ENCODE measurements at regions of chr6 and their contacts with region 1.

Region 1: GRCh38 chr6:149565527-149566409 is at the start of gene GINM1:
- DNase-seq: peak; percentile 93 to 98 (median 94)
- ATAC-seq: peak; percentile 95 to 98 (median 96)
- H3K4me3 ChIP-seq: peak within 1 kb of the TSS; percentile 60 to 100 (median 90)
- H3K27ac ChIP-seq: peak within 1 kb of the TSS; percentile 72 to 97 (median 92)
- H3K4me1 ChIP-seq: peaks cover 0 to 25% (median 9%) of the 10 kb centered on the region in 12 donors
- H3K27me3 ChIP-seq: no peaks in the 10 kb centered on the region
- CTCF ChIP-seq: peak; percentile 46 to 85 (median 58)
- POLR2A ChIP-seq: no peak
- total RNA-seq, gene GINM1: 42.4 to 60.5 (median 52.7) TPM

Region 2: DNA sequence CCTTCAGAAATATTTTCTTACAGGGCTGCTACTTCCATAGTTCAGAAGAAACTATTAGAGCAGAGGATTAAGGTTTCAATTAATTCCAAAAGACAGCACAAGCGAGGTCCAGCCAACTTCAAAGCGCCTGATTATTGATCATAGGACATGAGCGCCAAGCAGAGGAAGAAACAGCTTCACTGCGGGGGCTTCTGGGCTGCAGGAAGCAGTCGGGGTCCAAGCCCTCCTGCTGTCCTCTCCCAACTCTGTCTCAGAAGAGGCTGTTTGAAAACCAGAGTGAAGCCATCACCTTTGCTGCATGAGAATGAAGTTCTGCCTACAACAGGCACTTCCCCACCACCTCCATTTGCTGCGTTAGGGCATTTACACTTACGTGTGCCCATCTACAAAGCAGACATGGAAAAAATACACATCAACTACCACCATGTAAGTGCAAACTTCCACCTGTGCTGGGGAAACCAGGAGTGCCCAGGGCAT is 141.8 kb before region 1 on chr6:
- intact Hi-C with region 1: no loop called
- DNase-seq: no peak
- ATAC-seq: no peak
- H3K4me3 ChIP-seq: no peak overlapping the region
- H3K27ac ChIP-seq: peak overlapping the region in 2 of 12 donors; percentile 48 to 63
- H3K4me1 ChIP-seq: peaks cover 0 to 10% (median 2%) of the 10 kb centered on the region in 12 donors
- H3K27me3 ChIP-seq: peaks cover 0 to 6% (median 0%) of the 10 kb centered on the region in 9 donors
- CTCF ChIP-seq: no peak
- POLR2A ChIP-seq: no peak

Region 3: GRCh38 chr6:149545754-149546528 is 19.8 kb before region 1 on chr6 and contains the start of gene PPIL4:
- intact Hi-C with region 1: loop called in 1 of 10 experiments (anchors 1 kb)
- DNase-seq: peak; percentile 96 to 99 (median 98)
- ATAC-seq: peak; percentile 97 to 99 (median 98)
- H3K4me3 ChIP-seq: peak within 1 kb of the TSS; percentile 54 to 99 (median 92)
- H3K27ac ChIP-seq: peak within 1 kb of the TSS; percentile 90 to 99 (median 94)
- H3K4me1 ChIP-seq: peaks cover 4 to 37% (median 29%) of the 10 kb centered on the region in 12 donors
- H3K27me3 ChIP-seq: no peaks in the 10 kb centered on the region
- CTCF ChIP-seq: peak; percentile 76 to 95 (median 83)
- POLR2A ChIP-seq: peak; percentile 51 to 91
- total RNA-seq, gene PPIL4: 10.9 to 22.9 (median 16.9) TPM

Region 4: GRCh38 chr6:149636116-149636515 is 70.3 kb after region 1 on chr6:
- intact Hi-C with region 1: loop called in 2 of 10 experiments (anchors 10 kb)
- DNase-seq: no peak
- ATAC-seq: no peak
- H3K4me3 ChIP-seq: no peak overlapping the region
- H3K27ac ChIP-seq: no peak overlapping the region
- H3K4me1 ChIP-seq: peaks cover 0 to 4% (median 0%) of the 10 kb centered on the region in 12 donors
- H3K27me3 ChIP-seq: no peaks in the 10 kb centered on the region
- CTCF ChIP-seq: no peak
- POLR2A ChIP-seq: no peak

Region 5: GRCh38 chr6:149648148-149649145 is 82.7 kb after region 1 on chr6 and contains the start of gene KATNA1:
- intact Hi-C with region 1: loop called in 2 of 10 experiments (anchors 5 to 10 kb)
- DNase-seq: peak; percentile 85 to 95 (median 91)
- ATAC-seq: peak; percentile 90 to 98 (median 98)
- H3K4me3 ChIP-seq: peak within 1 kb of the TSS; percentile 71 to 97 (median 83)
- H3K27ac ChIP-seq: peak within 1 kb of the TSS; percentile 20 to 90 (median 84)
- H3K4me1 ChIP-seq: peaks cover 0 to 34% (median 16%) of the 10 kb centered on the region in 12 donors
- H3K27me3 ChIP-seq: no peaks in the 10 kb centered on the region
- CTCF ChIP-seq: peak in 4 of 12 donors; percentile 0 to 15 (median 8)
- POLR2A ChIP-seq: peak in 1 of 2 donors; percentile 82
- total RNA-seq, gene KATNA1: 9.6 to 19.3 (median 12.6) TPM

Region 6: GRCh38 chr6:149717588-149718458 is 152.1 kb after region 1 on chr6 and contains the start of gene LATS1:
- intact Hi-C with region 1: loop called in 3 of 10 experiments (anchors 5 kb)
- DNase-seq: peak; percentile 91 to 95 (median 95)
- ATAC-seq: peak; percentile 92 to 96 (median 94)
- H3K4me3 ChIP-seq: peak within 1 kb of the TSS; percentile 59 to 98 (median 81)
- H3K27ac ChIP-seq: peak within 1 kb of the TSS; percentile 94 to 100 (median 98)
- H3K4me1 ChIP-seq: peaks cover 3 to 39% (median 26%) of the 10 kb centered on the region in 12 donors
- H3K27me3 ChIP-seq: no peaks in the 10 kb centered on the region
- CTCF ChIP-seq: no peak
- POLR2A ChIP-seq: peak in 1 of 2 donors; percentile 73
- total RNA-seq, gene LATS1: 9.4 to 18.5 (median 10.9) TPM